SK-N-SH (cell line): ENCODE measurements at regions of chr4 and their contacts with region 1.

Region 1: GRCh38 chr4:700587-701264 is 4.9 kb upstream of the PCGF3 start:
- DNase-seq: no peak
- H3K4me3 ChIP-seq: no peak overlapping the region
- H3K27ac ChIP-seq: no peak overlapping the region
- H3K4me1 ChIP-seq: no peaks in the 10 kb centered on the region; a peak in 1 of 4 replicates
- H3K27me3 ChIP-seq: no peaks in the 10 kb centered on the region
- CTCF ChIP-seq: no peak
- EP300 ChIP-seq: no peak
- RAD21 ChIP-seq: peak; percentile 25; the same call in 1 of the 2 replicates

Region 2: DNA sequence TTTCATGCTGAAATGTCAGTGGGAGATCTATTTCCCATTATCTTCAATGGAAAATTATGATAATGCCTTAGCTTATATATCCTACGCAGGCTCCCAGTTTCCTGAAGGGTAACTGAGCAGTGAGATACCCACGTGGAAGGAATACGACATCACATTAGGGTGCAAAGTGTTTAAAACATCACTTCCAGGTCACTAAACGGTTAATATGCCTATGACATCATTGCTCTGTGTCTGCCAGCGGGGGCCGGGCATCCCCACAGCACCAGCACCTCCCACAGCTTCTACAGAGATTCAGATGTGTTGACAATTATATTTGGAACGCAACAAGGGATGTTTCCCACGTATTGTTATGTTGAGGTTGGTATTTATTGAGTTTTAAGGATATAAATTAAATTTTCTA is 151.8 kb before region 1 on chr4:
- CTCF ChIA-PET with region 1: no interaction called
- POLR2A ChIA-PET with region 1: no interaction called
- DNase-seq: no peak
- H3K4me3 ChIP-seq: no peak overlapping the region
- H3K27ac ChIP-seq: no peak overlapping the region
- H3K4me1 ChIP-seq: no peaks in the 10 kb centered on the region
- H3K27me3 ChIP-seq: peaks cover 24% of the 10 kb centered on the region; the same call in 1 of the 2 replicates
- CTCF ChIP-seq: no peak
- EP300 ChIP-seq: no peak
- RAD21 ChIP-seq: no peak

Region 3: GRCh38 chr4:683982-684622 is 16.6 kb before region 1 on chr4:
- CTCF ChIA-PET with region 1: interaction called, 22 read pairs
- POLR2A ChIA-PET with region 1: interaction called, 3 read pairs
- DNase-seq: peak; percentile 90
- H3K4me3 ChIP-seq: peak overlapping the region in 1 of 2 experiments; percentile 36; a peak in 1 of 4 replicates
- H3K27ac ChIP-seq: peak overlapping the region in 1 of 2 experiments; percentile 62; a peak in 2 of 4 replicates
- H3K4me1 ChIP-seq: peaks cover 13 to 38% of the 10 kb centered on the region in 2 experiments; a peak in 3 of 4 replicates
- H3K27me3 ChIP-seq: no peaks in the 10 kb centered on the region
- CTCF ChIP-seq: peak; percentile 80
- EP300 ChIP-seq: no peak
- RAD21 ChIP-seq: peak; percentile 49